Common myeloid progenitor, CD34-positive (primary cell): ENCODE measurements at regions of chr18 and their contacts with region 1.

Region 1: GRCh38 chr18:12657684-12658425 is at the start of gene SPIRE1:
- DNase-seq: peak; percentile 18 to 62 (median 45)
- H3K4me3 ChIP-seq: peak within 1 kb of the TSS; percentile 60 to 82 (median 71)
- H3K27ac ChIP-seq: peak within 1 kb of the TSS in 1 of 2 experiments; percentile 44
- H3K4me1 ChIP-seq: peaks cover 4 to 27% (median 12%) of the 10 kb centered on the region in 4 experiments
- H3K27me3 ChIP-seq: peaks cover 0 to 2% (median 0%) of the 10 kb centered on the region in 5 experiments

Region 2: DNA sequence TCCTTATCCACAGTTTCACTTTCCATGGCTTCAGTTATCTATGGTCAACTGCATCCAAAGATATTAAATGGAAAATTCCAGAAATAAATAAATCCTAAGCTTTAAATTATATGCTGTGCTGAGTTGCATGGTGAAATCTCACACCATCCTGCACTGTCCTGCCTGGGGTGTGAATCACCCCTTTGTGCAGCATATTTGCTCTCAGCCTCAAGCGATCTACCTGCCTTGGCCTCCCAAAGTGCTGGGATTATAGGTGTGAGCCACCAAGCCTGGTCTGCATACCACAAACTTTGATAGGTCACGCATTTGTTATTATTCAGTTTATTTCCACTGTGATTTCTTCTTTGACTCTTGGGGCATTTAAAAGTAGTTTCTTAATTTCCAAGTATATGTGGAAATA is 117.1 kb before region 1 on chr18:
- CTCF ChIA-PET with region 1: interaction called, 10 read pairs
- POLR2A ChIA-PET with region 1: no interaction called
- DNase-seq: no peak
- H3K4me3 ChIP-seq: no peak overlapping the region
- H3K27ac ChIP-seq: no peak overlapping the region
- H3K4me1 ChIP-seq: peaks cover 0 to 8% (median 4%) of the 10 kb centered on the region in 4 experiments
- H3K27me3 ChIP-seq: no peaks in the 10 kb centered on the region

Region 3: GRCh38 chr18:12615748-12616147 is 42.1 kb before region 1 on chr18:
- CTCF ChIA-PET with region 1: no interaction called
- POLR2A ChIA-PET with region 1: no interaction called
- DNase-seq: no peak
- H3K4me3 ChIP-seq: no peak overlapping the region
- H3K27ac ChIP-seq: no peak overlapping the region
- H3K4me1 ChIP-seq: peaks cover 0 to 12% (median 4%) of the 10 kb centered on the region in 4 experiments
- H3K27me3 ChIP-seq: no peaks in the 10 kb centered on the region

Region 4: GRCh38 chr18:12668041-12668440 is 10.2 kb after region 1 on chr18:
- CTCF ChIA-PET with region 1: no interaction called
- POLR2A ChIA-PET with region 1: no interaction called
- DNase-seq: no peak
- H3K4me3 ChIP-seq: no peak overlapping the region
- H3K27ac ChIP-seq: no peak overlapping the region
- H3K4me1 ChIP-seq: no peaks in the 10 kb centered on the region
- H3K27me3 ChIP-seq: no peaks in the 10 kb centered on the region

Region 5: DNA sequence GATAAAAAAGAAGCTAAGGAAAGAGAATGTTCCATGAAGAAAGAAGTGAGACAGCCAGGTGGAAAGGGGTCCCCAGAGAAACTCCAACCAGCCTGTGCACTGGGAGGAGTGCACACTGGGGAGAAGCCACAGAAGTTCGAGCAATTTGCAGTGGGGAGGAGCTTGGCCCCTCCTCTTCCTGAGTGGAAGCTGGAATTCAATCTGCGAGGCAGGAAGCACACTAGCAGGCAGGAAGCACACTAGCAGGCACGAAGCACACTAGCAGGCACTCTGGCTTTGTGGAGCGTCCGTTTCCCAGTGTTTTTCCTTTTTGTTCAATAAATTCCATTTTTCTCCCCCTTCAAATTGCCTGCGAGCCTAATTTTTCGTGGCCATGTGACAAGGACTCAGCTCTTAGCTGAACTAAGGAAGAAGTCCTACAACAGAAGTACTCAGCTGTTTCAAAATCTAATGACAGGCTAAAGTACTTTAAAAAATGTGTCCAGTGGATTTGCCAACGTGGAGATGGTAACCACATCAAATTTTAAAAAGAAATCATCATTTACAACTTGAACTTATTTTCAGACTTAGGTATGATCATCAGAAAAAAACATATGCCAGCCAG is 21.4 kb after region 1 on chr18:
- CTCF ChIA-PET with region 1: interaction called, 13 read pairs
- POLR2A ChIA-PET with region 1: interaction called, 3 read pairs
- DNase-seq: peak; percentile 14 to 51 (median 40)
- H3K4me3 ChIP-seq: peak overlapping the region; percentile 27 to 76 (median 55)
- H3K27ac ChIP-seq: peak overlapping the region; percentile 28 to 55
- H3K4me1 ChIP-seq: peaks cover 5 to 12% (median 9%) of the 10 kb centered on the region in 4 experiments
- H3K27me3 ChIP-seq: no peaks in the 10 kb centered on the region